ENCODE measurements at regions of chr16 and their contacts with region 1.

Region 1: DNA sequence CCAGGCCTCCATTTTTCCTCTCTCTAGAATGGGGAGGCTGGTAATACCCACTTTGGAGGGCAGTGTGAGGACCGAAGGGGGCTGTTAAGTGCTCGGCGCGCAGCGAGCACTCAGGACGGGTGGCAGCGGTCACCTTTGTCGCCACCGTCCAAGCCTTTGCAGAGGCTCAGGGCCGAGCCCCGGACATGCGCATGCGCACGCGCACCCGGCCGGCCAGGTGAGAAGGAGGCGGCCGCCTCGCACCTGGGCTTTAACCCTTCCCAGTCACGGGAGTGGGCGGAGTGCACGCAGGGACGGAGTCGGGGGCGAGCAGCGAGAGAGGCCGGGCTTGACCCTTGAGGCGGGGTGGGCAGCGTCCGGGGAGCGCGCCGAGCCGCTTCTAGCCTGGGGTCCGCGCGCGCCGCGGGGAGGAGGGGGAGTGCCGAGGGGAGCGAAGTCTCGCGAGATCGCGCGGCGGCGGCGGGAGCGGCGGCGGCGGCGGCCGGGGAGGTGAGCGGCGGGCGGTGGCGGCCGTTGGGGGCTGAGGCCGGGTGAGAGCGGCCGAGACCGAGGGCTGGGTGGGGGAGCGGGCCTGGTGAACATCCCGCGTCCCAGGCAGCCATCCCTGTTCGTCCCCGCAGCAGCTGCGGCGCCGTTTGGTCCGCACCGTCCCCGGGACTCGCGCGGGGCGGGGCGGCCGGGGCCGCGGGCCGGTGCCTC is at the start of gene MRTFB:
- DNase-seq: no peak
- H3K4me3 ChIP-seq: peak within 1 kb of the TSS; percentile 80 to 95 (median 88)
- H3K27ac ChIP-seq: peak within 1 kb of the TSS; percentile 82 to 88 (median 86)
- H3K4me1 ChIP-seq: peaks cover 12 to 36% (median 30%) of the 10 kb centered on the region in 4 donors
- H3K27me3 ChIP-seq: no peaks in the 10 kb centered on the region
- CTCF ChIP-seq: no peak
- EP300 ChIP-seq: no peak
- POLR2A ChIP-seq: no peak
- total RNA-seq, gene MRTFB: 36.3 to 63.6 (median 48.2) TPM

Region 2: GRCh38 chr16:14013571-14014282 is 57.3 kb before region 1 on chr16:
- intact Hi-C with region 1: no loop called
- DNase-seq: no peak
- H3K4me3 ChIP-seq: peak overlapping the region; percentile 0 to 28 (median 6)
- H3K27ac ChIP-seq: peak overlapping the region; percentile 52 to 72 (median 63)
- H3K4me1 ChIP-seq: peaks cover 26 to 44% (median 41%) of the 10 kb centered on the region in 4 donors
- H3K27me3 ChIP-seq: no peaks in the 10 kb centered on the region
- CTCF ChIP-seq: no peak
- EP300 ChIP-seq: no peak
- POLR2A ChIP-seq: no peak

Region 3: DNA sequence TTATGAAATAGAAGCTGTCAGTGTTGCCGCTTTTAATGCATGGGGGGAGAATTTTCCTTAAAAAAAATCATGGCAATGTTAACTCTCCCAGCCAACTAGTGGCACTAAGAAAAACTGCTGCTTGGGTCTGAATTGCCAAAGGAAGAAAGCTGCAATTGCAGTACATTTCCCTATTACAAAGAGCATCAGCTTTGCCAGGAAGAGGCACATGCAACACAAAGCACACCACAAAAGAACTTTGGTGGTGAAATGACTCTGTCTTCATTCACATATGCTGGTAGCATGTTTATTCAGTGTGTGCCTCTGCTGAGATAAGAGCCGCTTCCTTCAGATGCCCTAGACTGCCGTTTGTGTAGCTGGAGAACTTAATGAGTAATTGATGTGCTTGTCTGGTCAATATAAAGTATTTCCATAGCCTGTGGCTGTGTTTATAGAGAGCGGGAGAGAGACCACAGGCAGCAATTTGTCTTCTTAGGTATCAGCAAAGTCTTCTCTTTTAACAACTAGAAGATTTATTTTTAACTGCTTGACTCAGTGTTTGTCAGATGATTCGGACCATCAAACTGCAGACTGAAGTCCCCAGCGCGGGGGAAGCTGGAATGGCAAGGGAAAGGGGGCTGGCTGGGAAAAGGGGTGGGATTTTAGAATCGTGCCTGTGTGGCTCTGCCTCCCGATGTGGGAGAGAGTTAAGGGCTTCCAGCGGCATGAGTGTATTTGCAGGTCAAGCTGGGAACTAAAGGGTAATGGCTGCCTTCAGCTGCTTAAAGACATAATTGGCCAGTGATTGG is 115.2 kb after region 1 on chr16:
- intact Hi-C with region 1: loop called (anchors 5 kb)
- DNase-seq: no peak
- H3K4me3 ChIP-seq: peak overlapping the region; percentile 46 to 60 (median 48)
- H3K27ac ChIP-seq: peak overlapping the region; percentile 57 to 72 (median 70)
- H3K4me1 ChIP-seq: peaks cover 25 to 73% (median 51%) of the 10 kb centered on the region in 4 donors
- H3K27me3 ChIP-seq: no peaks in the 10 kb centered on the region
- CTCF ChIP-seq: peak; percentile 45 to 76 (median 46)
- EP300 ChIP-seq: no peak
- POLR2A ChIP-seq: no peak

Region 4: GRCh38 chr16:14249291-14250032 is 178.4 kb after region 1 on chr16:
- intact Hi-C with region 1: loop called (anchors 10 kb)
- DNase-seq: peak; percentile 66
- H3K4me3 ChIP-seq: no peak overlapping the region
- H3K27ac ChIP-seq: no peak overlapping the region
- H3K4me1 ChIP-seq: peaks cover 0 to 4% (median 0%) of the 10 kb centered on the region in 4 donors
- H3K27me3 ChIP-seq: no peaks in the 10 kb centered on the region
- CTCF ChIP-seq: peak; percentile 67 to 87 (median 80)
- EP300 ChIP-seq: no peak
- POLR2A ChIP-seq: no peak

Measured in esophagus muscularis mucosa (tissue), 4 donors.